ENCODE measurements at regions of chr4 and their contacts with region 1.

Region 1: DNA sequence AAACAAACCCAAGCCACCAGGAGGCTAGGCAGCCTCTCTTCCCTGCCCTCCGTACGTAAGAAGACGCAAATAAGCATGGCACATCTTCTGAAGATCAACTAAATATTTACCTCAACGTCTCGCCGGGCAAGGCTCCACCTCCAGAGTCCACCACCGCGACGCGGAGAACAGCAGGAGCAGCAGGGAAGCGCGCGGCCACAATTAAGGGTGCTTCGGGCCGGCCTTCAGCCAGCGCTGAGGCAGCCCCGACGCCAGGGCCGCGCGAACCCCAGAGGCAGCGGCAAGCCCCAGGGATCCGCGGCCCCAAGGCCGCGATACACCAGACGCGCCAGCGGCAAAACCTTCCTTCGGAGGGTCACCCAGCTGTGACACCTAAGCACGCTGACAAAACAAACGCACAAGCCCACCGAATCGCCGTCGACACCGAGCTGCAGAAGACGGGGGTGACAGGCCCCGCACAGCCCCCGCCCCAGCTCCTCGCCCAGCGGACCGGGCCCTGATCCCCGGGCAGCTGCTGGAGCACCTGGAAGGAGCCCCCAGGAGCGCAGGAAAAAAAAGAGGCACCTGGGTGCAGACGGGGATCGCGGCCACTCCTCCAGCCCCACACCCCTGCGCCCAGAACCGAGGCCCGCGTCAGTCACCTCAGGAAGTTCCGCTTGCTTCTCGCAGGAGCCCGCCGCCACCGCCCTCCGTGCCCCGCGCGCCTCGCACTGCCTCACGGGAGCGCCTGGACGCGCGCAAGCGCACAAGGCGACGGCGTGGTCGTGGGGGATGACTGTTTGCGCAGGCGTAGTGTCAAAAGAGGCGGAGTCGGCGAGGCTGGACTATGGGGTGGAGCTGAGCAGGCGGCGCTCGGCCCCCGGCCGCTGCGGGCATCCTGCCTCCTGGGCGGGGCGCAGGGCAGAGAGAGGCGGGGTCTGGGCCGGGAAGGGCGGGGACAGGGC is at the starts of genes HAUS3 and POLN:
- DNase-seq: peak; percentile 99
- ATAC-seq: peak; percentile 97
- H3K4me3 Mint-ChIP-seq: peak within 1 kb of the TSS; percentile 91
- H3K27ac Mint-ChIP-seq: peak within 1 kb of the TSS; percentile 88
- H3K4me1 Mint-ChIP-seq: peaks cover 54% of the 10 kb centered on the region
- H3K27me3 Mint-ChIP-seq: no peaks in the 10 kb centered on the region
- total RNA-seq, gene HAUS3: 14.6 to 18.6 TPM
- total RNA-seq, gene POLN: 2.3 to 3.2 TPM

Region 2: GRCh38 chr4:1721004-1721665 is 520.5 kb before region 1 on chr4 and contains the starts of genes TACC3 and TMEM129:
- CTCF ChIA-PET with region 1: no interaction called
- POLR2A ChIA-PET with region 1: no interaction called
- intact Hi-C with region 1: loop called in 1 of 2 experiments (anchors 2 kb)
- DNase-seq: peak; percentile 96
- ATAC-seq: peak; percentile 81
- H3K4me3 Mint-ChIP-seq: peak within 1 kb of the TSS; percentile 96
- H3K27ac Mint-ChIP-seq: peak within 1 kb of the TSS; percentile 99
- H3K4me1 Mint-ChIP-seq: peaks cover 52% of the 10 kb centered on the region
- H3K27me3 Mint-ChIP-seq: no peaks in the 10 kb centered on the region
- total RNA-seq, gene TACC3: 197 to 206 TPM
- total RNA-seq, gene TMEM129: 13.7 to 14.6 TPM

Region 3: GRCh38 chr4:2008875-2009703 is 232.6 kb before region 1 on chr4 and contains the start of gene NELFA:
- CTCF ChIA-PET with region 1: no interaction called
- POLR2A ChIA-PET with region 1: no interaction called
- intact Hi-C with region 1: loop called (anchors 1 kb)
- DNase-seq: peak; percentile 97
- ATAC-seq: peak; percentile 81
- H3K4me3 Mint-ChIP-seq: peak within 1 kb of the TSS; percentile 87
- H3K27ac Mint-ChIP-seq: peak within 1 kb of the TSS; percentile 90
- H3K4me1 Mint-ChIP-seq: peaks cover 34% of the 10 kb centered on the region
- H3K27me3 Mint-ChIP-seq: no peaks in the 10 kb centered on the region
- total RNA-seq, gene NELFA: 41.6 to 48.3 TPM

Region 4: DNA sequence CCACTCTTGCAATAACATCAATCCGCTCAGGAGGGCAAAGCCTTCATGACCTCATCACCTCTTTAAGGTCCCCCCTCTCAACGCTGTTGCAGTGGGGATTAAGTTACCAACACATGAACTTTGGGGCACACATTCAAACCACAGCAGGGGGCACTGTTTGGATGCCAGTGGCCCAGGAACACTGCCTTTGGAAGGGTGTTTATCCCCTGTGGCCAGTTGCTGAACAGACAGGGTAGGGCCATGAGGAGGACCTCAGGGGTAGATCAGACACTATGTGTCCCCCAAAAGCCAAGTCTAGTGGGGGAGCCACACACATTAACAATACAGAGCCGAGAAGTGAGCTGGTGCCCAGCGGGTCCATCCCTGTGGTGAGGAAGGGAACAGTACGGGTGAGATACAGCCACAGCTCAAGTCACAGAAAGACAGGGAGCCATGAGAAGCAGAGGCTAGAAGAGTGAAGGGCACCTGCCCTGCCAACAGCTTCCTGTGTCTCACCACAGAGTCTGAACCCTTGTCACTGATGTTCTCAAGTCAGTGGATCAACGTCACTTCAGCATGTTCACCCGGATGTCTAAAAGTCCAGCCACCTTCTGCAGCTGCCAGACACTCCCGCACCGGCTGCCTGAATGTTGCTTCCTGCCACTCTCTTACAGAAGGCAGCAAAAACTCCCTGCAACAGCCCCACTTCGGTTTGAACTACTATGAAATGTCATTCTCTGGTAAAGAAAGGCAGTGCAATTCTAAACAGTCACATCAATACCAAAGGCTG is 40.1 kb after region 1 on chr4:
- CTCF ChIA-PET with region 1: interaction called, 4 read pairs
- POLR2A ChIA-PET with region 1: no interaction called
- intact Hi-C with region 1: loop called in 1 of 2 experiments (anchors 2 kb)
- DNase-seq: peak; percentile 83
- ATAC-seq: peak; percentile 96
- H3K4me3 Mint-ChIP-seq: no peak overlapping the region
- H3K27ac Mint-ChIP-seq: peak overlapping the region; percentile 82
- H3K4me1 Mint-ChIP-seq: peaks cover 34% of the 10 kb centered on the region
- H3K27me3 Mint-ChIP-seq: no peaks in the 10 kb centered on the region

Region 5: GRCh38 chr4:2412885-2413716 is 171.4 kb after region 1 on chr4:
- CTCF ChIA-PET with region 1: interaction called, 3 read pairs
- POLR2A ChIA-PET with region 1: interaction called, 4 read pairs
- intact Hi-C with region 1: loop called (anchors 1 kb)
- DNase-seq: peak; percentile 94
- ATAC-seq: peak; percentile 82
- H3K4me3 Mint-ChIP-seq: peak overlapping the region; percentile 70
- H3K27ac Mint-ChIP-seq: peak overlapping the region; percentile 97
- H3K4me1 Mint-ChIP-seq: peaks cover 69% of the 10 kb centered on the region
- H3K27me3 Mint-ChIP-seq: peaks cover 9% of the 10 kb centered on the region

Region 6: DNA sequence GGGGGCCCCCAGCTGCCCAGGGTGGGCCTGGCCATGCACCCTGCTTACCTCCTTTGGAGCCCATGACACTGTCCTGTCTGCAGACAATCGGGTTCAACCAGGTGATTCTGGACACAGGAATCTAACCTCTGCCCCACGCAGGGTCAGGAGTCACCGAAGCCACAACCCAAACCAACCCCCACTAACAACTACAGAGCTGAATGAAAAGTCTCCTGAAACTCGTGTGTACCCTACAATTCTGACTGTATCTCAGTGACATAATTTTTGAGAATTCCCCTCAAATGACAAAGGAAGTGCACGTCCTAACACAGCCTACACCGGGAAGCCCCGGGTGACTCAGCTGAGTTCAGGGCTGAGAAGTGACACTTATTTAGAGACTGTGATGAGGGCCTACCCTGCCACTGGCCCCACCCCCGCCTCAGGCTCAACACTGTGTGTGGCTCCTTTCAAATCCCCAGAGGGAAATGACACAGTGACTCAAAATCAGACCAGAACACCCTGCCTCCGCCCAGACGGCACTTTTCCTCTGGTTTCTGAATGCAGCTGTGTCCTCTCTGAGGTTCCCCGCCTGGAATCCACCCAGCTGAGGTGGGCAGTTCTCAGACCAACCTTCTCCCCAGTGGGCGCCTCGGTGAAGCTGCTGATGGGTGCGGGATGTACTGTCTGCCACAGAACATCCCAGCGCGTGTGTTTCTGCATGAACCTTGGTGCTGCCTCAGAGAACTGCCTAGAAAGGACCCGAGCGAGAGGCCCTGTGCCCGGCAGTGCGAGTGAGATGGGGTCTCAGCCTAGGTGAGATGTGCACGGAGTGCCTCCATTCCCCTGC is 504.5 kb after region 1 on chr4:
- CTCF ChIA-PET with region 1: no interaction called
- POLR2A ChIA-PET with region 1: no interaction called
- intact Hi-C with region 1: loop called in 1 of 2 experiments (anchors 5 kb)
- DNase-seq: peak; percentile 98
- ATAC-seq: peak; percentile 97
- H3K4me3 Mint-ChIP-seq: peak overlapping the region; percentile 62
- H3K27ac Mint-ChIP-seq: peak overlapping the region; percentile 97
- H3K4me1 Mint-ChIP-seq: peaks cover 58% of the 10 kb centered on the region
- H3K27me3 Mint-ChIP-seq: no peaks in the 10 kb centered on the region

Measured in activated CD4-positive, alpha-beta T cell treated with anti-CD3 and anti-CD28 coated beads for 36 hours (primary cell).